MCF 10A (cell line): ENCODE measurements at regions of chr19 and their contacts with region 1.

Region 1: DNA sequence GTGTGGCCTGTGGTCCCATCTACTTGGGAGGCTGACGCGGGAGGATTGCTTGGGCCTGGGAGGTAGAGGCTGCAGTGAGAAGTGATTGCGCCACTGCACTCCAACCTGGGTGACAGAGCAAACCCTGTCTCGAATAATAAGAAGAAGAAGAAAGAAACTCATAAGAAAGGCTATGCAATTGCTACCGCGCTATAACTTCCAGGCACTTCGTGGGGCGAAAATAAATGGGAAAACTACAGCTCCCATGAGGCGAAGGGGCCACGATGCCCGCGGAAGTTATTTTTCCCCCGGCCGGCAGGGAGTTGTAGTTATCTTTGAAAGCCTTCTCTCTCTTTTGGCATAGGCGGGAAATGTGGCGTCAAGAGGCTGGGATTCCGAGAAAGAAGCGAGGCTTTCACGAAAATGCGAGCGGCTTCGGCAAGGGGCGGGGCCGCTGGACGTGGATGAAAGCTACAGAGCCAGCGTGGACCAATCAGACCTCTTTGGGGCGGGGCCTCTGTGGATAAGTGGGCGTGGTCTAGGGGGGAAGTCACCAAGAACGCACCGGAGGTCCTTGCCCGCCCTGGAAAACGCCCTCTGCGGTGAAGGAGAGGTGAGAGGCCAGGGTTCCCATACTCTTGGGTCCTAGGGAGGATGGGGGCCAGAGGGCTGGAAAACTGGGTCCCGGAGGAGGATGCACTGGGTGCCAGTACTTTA is at the start of gene NUCB1:
- DNase-seq: peak; percentile 99
- H3K4me3 Mint-ChIP-seq: peak within 1 kb of the TSS; percentile 99
- H3K27ac Mint-ChIP-seq: peak within 1 kb of the TSS; percentile 87
- H3K4me1 Mint-ChIP-seq: peaks cover 14% of the 10 kb centered on the region
- H3K27me3 Mint-ChIP-seq: no peaks in the 10 kb centered on the region
- CTCF ChIP-seq: no peak
- total RNA-seq, gene NUCB1: 61.4 and 76.8 TPM in 2 replicates

Region 2: GRCh38 chr19:48954595-48955310 is 54.8 kb after region 1 on chr19 and contains the start of gene BAX:
- CTCF ChIA-PET with region 1: no interaction called
- POLR2A ChIA-PET with region 1: interaction called, 3 read pairs
- intact Hi-C with region 1: loop called (anchors 2 kb)
- DNase-seq: peak; percentile 98
- H3K4me3 Mint-ChIP-seq: peak within 1 kb of the TSS; percentile 81
- H3K27ac Mint-ChIP-seq: peak within 1 kb of the TSS; percentile 83
- H3K4me1 Mint-ChIP-seq: peaks cover 6% of the 10 kb centered on the region
- H3K27me3 Mint-ChIP-seq: no peaks in the 10 kb centered on the region
- CTCF ChIP-seq: no peak
- total RNA-seq, gene BAX: 130 and 152 TPM in 2 replicates

Region 3: DNA sequence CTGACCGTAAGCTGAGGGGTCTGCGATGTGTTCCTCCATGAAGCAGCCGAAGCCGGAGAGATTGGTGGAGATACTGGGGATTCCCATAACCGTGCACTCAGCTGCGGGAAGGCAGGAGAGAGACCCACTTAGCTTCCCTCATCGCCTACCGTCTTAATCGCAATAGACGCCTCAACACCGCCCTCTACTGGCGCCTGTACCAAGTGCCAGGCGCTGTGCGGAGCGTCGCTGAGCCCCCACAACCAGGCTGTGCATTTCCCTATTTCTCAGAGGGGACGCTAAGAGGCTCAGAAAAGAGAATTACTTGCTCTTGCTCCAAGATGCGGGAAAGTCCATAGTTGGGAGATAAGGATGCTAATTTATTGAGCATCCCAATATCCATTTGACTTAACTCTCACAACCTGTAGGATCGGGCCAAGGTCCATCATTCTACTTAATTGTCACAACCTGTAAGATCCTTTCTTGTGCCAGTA is 71.0 kb after region 1 on chr19:
- CTCF ChIA-PET with region 1: no interaction called
- POLR2A ChIA-PET with region 1: interaction called, 13 read pairs
- intact Hi-C with region 1: loop called (anchors 2 kb)
- DNase-seq: peak; percentile 75
- H3K4me3 Mint-ChIP-seq: no peak overlapping the region
- H3K27ac Mint-ChIP-seq: no peak overlapping the region
- H3K4me1 Mint-ChIP-seq: peaks cover 6% of the 10 kb centered on the region
- H3K27me3 Mint-ChIP-seq: no peaks in the 10 kb centered on the region
- CTCF ChIP-seq: peak; percentile 89

Region 4: GRCh38 chr19:48982280-48982679 is 82.4 kb after region 1 on chr19:
- CTCF ChIA-PET with region 1: no interaction called
- POLR2A ChIA-PET with region 1: no interaction called
- intact Hi-C with region 1: no loop called
- DNase-seq: no peak
- H3K4me3 Mint-ChIP-seq: no peak overlapping the region
- H3K27ac Mint-ChIP-seq: no peak overlapping the region
- H3K4me1 Mint-ChIP-seq: peaks cover 12% of the 10 kb centered on the region
- H3K27me3 Mint-ChIP-seq: no peaks in the 10 kb centered on the region
- CTCF ChIP-seq: no peak